Heart right ventricle (tissue), 16 donors: ENCODE measurements at regions of chr7 and their contacts with region 1.

Region 1: DNA sequence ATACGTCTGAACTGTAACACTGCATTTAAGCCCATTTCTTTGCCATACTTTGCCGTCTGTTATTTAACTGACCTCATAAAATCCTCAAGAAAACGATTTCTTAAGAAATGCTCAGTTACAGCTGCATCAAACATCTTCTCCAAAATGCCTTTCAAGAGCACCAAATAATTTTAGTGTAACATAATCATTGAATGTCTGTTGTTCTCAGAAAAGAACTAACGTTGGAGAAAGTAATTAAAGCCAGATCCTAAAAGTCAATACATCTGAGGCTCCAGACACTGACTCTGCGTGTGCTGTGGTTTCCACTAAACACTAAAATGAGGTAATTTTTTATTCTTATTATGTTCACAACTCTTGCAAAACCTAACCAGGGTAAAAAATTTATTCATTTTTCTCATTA is 63.7 kb upstream of the LRRC17 start:
- DNase-seq: no peak
- ATAC-seq: no peak
- H3K4me3 ChIP-seq: no peak overlapping the region
- H3K27ac ChIP-seq: no peak overlapping the region
- H3K4me1 ChIP-seq: no peaks in the 10 kb centered on the region
- H3K27me3 ChIP-seq: no peaks in the 10 kb centered on the region
- CTCF ChIP-seq: no peak

Region 2: DNA sequence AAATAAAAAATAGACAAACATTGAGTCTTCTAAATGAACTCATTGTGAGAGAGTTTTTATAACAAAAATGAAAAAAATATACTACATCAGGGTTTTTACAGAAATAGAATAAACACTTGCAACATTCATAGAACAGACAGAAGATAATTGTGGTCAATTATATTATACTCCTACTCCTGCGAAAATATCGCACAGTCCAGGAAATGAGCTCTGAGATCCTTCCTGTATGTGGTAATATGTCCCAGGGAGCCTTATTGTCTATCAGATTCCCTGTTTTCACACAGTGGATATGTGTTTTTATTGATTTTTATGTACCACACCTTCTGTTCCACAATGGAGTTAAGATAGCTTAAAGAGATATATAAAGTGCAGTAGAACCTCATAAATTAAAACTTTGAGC is 1167.9 kb after region 1 on chr7:
- intact Hi-C with region 1: loop called in 1 of 10 experiments (anchors 5 kb)
- DNase-seq: no peak
- ATAC-seq: no peak
- H3K4me3 ChIP-seq: no peak overlapping the region
- H3K27ac ChIP-seq: no peak overlapping the region
- H3K4me1 ChIP-seq: no peaks in the 10 kb centered on the region
- H3K27me3 ChIP-seq: no peaks in the 10 kb centered on the region
- CTCF ChIP-seq: no peak